HCT116 (cell line): ENCODE measurements at regions of chr7 and their contacts with region 1.

Region 1: DNA sequence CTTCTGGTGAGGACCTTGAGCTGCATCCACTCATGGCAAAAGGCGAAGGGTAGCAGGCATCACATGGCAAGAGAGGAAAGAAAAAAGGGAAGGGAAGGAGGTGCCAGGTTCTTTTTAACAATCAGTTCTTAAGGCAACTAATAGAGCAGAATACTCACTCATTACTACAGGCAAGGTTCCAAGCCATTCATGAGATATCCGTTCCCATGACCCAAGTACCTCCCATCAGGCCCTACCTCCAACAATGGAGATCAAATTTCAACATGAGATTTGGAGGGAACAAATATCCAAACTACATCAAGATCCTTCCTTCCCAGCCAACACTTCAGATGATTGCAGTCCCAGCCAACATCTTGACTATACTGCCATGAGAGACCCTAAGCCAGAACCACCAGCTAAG is 38.9 kb upstream of the YAE1 start:
- DNase-seq: no peak
- ATAC-seq: no peak
- H3K4me3 ChIP-seq: no peak overlapping the region
- H3K27ac ChIP-seq: no peak overlapping the region
- H3K4me1 ChIP-seq: no peaks in the 10 kb centered on the region
- H3K27me3 ChIP-seq: no peaks in the 10 kb centered on the region
- CTCF ChIP-seq: no peak
- POLR2A ChIP-seq: no peak
- RAD21 ChIP-seq: no peak

Region 2: GRCh38 chr7:39453743-39454355 is 73.4 kb before region 1 on chr7:
- CTCF ChIA-PET with region 1: no interaction called
- POLR2A ChIA-PET with region 1: no interaction called
- RAD21 ChIA-PET with region 1: no interaction called
- intact Hi-C with region 1: loop called (anchors 5 kb)
- DNase-seq: peak; percentile 48
- ATAC-seq: peak; percentile 95
- H3K4me3 ChIP-seq: no peak overlapping the region
- H3K27ac ChIP-seq: no peak overlapping the region
- H3K4me1 ChIP-seq: no peaks in the 10 kb centered on the region
- H3K27me3 ChIP-seq: peaks cover 7% of the 10 kb centered on the region
- CTCF ChIP-seq: peak; percentile 43 to 97 (median 96)
- POLR2A ChIP-seq: no peak
- RAD21 ChIP-seq: peak; percentile 52